AG04450 (cell line): ENCODE measurements at regions of chr1 and their contacts with region 1.

Region 1: DNA sequence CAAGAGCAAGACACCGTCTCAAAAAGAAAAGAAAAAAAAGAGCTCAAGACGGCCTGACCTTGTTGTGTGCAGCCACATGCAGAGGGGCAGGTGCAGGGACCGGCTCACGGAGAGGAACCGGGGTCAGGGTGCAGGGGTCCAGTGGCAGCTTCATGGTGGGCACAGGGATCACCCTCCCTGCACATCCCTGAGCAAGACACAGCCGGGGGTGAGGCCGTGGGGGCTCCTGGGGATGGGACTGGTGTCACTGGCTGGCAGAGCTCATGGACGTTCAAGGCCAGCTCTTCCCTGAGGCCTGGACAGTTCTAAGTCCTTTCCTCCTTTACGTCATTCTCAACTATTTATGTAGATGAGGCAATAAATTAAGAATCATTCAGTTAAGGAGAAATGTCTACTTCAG is 6.6 kb upstream of the TMEM240 start:
- DNase-seq: no peak
- H3K4me3 ChIP-seq: no peak overlapping the region
- H3K27ac ChIP-seq: no peak overlapping the region
- H3K27me3 ChIP-seq: no peaks in the 10 kb centered on the region
- CTCF ChIP-seq: no peak

Region 2: DNA sequence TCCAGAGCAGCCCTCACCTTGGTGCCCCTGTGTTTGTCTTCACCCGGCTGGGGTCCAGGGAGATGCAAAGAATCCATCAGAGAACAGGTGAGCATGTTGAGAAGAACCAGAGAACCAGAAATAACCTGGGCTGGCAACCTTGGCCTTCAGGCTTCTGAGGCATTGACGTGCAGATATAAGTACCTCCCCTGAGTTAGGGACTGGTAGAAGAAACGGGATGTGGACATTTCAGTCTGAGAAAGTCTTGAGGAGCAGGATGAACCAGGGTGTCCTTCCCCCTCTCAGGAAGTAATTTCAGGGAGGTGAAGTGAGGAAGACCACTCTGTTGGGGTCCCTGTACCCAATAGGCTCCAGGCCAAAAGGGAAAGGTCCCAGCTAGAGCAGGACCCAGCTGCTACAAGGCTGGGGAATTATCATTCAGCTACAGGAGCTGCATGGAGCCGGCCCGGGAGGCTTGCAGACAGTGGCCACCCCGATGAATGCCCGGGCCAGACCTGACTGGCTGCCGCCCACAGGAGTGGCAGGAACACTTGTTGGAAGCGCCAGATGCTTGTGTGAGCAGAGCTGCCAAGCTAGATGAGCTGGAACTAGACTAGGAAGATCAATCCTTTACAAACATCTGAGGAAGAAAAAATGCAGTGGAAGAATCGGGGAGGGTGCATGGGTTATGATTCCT is 170.3 kb before region 1 on chr1:
- CTCF ChIA-PET with region 1: no interaction called
- POLR2A ChIA-PET with region 1: no interaction called
- DNase-seq: no peak
- H3K4me3 ChIP-seq: no peak overlapping the region
- H3K27ac ChIP-seq: no peak overlapping the region
- H3K27me3 ChIP-seq: no peaks in the 10 kb centered on the region
- CTCF ChIP-seq: no peak

Region 3: GRCh38 chr1:1561801-1562470 is 14.9 kb after region 1 on chr1:
- CTCF ChIA-PET with region 1: interaction called, 3 read pairs
- POLR2A ChIA-PET with region 1: interaction called, 15 read pairs
- DNase-seq: no peak
- H3K4me3 ChIP-seq: no peak overlapping the region
- H3K27ac ChIP-seq: no peak overlapping the region
- H3K27me3 ChIP-seq: no peaks in the 10 kb centered on the region
- CTCF ChIP-seq: no peak